K562 (cell line): ENCODE measurements at regions of chr3 and their contacts with region 1.

Region 1: GRCh38 chr3:62911526-62911925 is 36.3 kb upstream of the CADPS start:
- DNase-seq: no peak
- ATAC-seq: no peak
- H3K4me3 ChIP-seq: no peak overlapping the region
- H3K27ac ChIP-seq: no peak overlapping the region
- H3K4me1 ChIP-seq: no peaks in the 10 kb centered on the region
- H3K27me3 ChIP-seq: no peaks in the 10 kb centered on the region
- CTCF ChIP-seq: no peak
- EP300 ChIP-seq: no peak
- POLR2A ChIP-seq: no peak
- RAD21 ChIP-seq: no peak

Region 2: GRCh38 chr3:62990704-62991413 is 79.3 kb after region 1 on chr3:
- CTCF ChIA-PET with region 1: no interaction called
- POLR2A ChIA-PET with region 1: no interaction called
- in situ Hi-C with region 1: no loop called
- intact Hi-C with region 1: loop called (anchors 10 kb)
- DNase-seq: no peak
- ATAC-seq: no peak
- H3K4me3 ChIP-seq: no peak overlapping the region
- H3K27ac ChIP-seq: no peak overlapping the region
- H3K4me1 ChIP-seq: no peaks in the 10 kb centered on the region
- H3K27me3 ChIP-seq: no peaks in the 10 kb centered on the region
- CTCF ChIP-seq: no peak
- EP300 ChIP-seq: no peak
- POLR2A ChIP-seq: no peak
- RAD21 ChIP-seq: no peak